Activated CD4-positive, alpha-beta T cell treated with anti-CD3 and anti-CD28 coated beads for 36 hours (primary cell): ENCODE measurements at regions of chr4 and their contacts with region 1.

Region 1: GRCh38 chr4:139177868-139178611 is 1.0 kb upstream of the ELF2 start:
- DNase-seq: peak; percentile 95
- ATAC-seq: peak; percentile 77
- H3K4me3 Mint-ChIP-seq: peak overlapping the region; percentile 81
- H3K27ac Mint-ChIP-seq: peak overlapping the region; percentile 72
- H3K4me1 Mint-ChIP-seq: peaks cover 12% of the 10 kb centered on the region
- H3K27me3 Mint-ChIP-seq: peaks cover 12% of the 10 kb centered on the region

Region 2: DNA sequence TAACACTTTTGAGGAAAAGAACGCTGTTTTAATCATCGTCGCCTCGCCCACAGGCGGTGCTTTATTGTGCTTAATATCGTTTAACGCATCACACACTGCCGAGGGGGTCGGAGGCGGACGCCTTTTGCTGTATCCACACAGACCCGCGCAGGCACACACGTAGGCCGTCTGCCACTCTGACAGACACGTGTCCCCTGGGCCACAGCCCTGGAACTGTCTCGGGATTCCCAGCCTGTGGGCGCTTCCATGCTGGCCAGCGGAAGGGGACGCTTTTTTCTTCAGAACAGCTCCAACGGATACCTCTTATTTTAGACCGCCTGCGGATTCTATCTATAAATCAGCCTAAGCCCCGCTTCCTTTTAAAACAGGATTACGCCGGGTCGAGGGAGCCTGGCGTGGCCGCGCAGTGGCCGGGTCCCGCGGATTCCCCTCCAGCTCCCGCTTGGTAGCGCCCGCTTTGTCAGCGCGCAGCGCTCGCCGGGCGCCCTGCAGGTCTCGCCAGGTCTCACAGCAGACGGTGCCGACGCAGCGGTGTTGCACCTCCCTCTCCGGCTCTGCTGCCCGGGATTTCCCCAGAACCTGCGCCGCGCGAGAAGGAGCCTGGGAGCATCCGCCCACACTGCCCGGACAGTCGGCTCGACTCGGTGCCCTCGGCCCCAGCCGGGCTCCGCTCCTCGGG is 162.6 kb before region 1 on chr4 and contains the start of gene NOCT:
- CTCF ChIA-PET with region 1: no interaction called
- POLR2A ChIA-PET with region 1: no interaction called
- intact Hi-C with region 1: loop called (anchors 1 kb)
- DNase-seq: peak; percentile 98
- ATAC-seq: peak; percentile 92
- H3K4me3 Mint-ChIP-seq: peak within 1 kb of the TSS; percentile 90
- H3K27ac Mint-ChIP-seq: peak within 1 kb of the TSS; percentile 96
- H3K4me1 Mint-ChIP-seq: peaks cover 41% of the 10 kb centered on the region
- H3K27me3 Mint-ChIP-seq: no peaks in the 10 kb centered on the region
- total RNA-seq, gene NOCT: 16.5 to 20.5 TPM

Region 3: DNA sequence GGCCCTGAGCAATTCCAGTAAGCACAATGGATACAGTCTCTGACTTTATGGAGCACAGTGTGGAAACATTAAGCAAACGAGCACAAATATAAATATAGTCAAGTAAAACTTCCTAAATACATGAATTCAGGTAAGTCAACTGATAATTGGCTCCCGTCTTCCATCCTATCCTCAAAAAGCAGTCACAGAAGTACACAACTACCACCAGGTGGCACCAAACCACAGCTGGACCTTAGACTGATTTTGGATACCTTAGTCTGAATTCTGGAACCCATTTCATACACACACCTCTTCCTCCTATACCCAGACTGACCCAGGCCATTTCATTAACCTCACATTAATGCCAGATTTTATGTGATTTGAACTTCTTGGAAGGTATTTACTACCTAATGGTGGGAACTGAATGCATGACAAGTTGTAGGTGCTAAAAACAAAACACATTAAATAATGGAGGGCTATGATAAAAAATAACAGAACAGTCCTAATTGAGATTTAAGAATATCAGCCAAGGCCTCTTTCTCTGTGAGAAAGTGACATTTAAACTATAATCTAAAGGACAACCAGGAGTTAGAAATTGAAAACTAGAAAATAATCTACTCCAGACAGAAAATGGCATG is 78.6 kb before region 1 on chr4:
- CTCF ChIA-PET with region 1: interaction called, 8 read pairs
- POLR2A ChIA-PET with region 1: no interaction called
- intact Hi-C with region 1: loop called (anchors 1 to 2 kb)
- DNase-seq: peak; percentile 84
- ATAC-seq: peak; percentile 66
- H3K4me3 Mint-ChIP-seq: no peak overlapping the region
- H3K27ac Mint-ChIP-seq: no peak overlapping the region
- H3K4me1 Mint-ChIP-seq: peaks cover 2% of the 10 kb centered on the region
- H3K27me3 Mint-ChIP-seq: no peaks in the 10 kb centered on the region

Region 4: DNA sequence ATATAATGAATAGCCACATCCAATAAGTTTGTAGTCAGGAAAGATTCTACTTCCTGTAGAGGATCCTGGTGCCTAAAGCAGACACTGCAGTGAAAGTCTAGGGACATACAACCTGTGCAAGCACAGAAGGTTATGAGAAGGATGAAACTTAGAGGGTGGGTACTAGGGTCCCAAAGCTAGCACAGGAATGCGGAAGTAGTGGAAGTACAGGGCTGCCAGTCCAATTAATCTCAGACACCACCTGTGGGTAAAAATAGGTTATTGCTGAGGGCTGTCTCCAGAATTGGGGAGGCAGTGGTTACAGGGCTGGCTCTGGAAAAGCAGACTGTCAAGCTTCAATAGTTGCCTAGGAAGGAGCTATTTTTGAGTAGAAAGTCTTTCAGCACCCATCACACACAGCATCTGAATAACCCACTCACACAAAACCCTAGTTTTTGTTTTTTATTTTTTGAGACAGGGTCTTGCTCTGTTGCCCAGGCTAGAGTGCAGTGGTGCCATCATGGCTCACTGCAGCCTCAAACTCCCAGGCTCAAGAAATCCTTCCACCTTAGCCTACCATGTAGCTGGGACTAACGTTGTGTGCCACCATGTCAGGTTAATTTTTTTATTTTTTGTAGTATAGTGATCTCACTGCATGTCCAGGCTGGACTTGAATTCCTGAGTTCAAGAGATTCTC is 49.8 kb after region 1 on chr4:
- CTCF ChIA-PET with region 1: no interaction called
- POLR2A ChIA-PET with region 1: no interaction called
- intact Hi-C with region 1: no loop called
- DNase-seq: peak; percentile 7
- ATAC-seq: peak; percentile 53
- H3K4me3 Mint-ChIP-seq: no peak overlapping the region
- H3K27ac Mint-ChIP-seq: no peak overlapping the region
- H3K4me1 Mint-ChIP-seq: peaks cover 17% of the 10 kb centered on the region
- H3K27me3 Mint-ChIP-seq: no peaks in the 10 kb centered on the region

Region 5: DNA sequence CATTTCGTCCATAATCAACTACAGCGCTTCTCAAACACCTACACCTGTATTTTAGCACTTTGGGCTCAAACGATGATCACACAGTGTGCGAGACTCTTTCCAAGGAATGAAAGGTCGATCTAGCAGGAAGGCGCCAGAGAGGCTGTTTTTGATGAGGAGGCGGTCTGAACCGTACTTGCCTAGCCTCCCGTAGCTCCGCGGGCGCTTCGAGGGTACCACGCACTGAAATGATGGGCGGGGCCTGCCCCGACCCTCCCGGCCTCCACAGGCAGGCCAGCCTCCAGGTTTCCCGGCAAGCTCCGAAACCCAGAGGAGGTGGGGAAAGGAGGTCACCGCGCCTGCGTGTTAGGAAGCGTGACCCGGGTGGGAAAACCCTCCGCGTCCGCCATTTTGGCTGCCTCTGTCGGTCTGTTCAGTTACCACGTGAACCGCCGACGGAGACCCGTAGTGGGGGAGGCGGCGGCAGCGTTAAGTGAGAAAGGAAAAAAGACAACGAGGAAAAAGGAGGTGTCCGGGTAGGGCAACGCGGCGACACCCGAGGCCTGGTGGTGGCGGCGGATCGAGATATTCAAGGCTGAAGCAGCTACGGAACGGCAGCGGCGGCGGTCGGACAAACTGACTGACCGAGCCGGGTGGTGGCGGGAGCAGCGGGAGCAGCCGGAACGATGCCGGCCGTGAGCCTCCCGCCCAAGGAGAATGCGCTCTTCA is 123.2 kb after region 1 on chr4 and contains the start of gene NAA15:
- CTCF ChIA-PET with region 1: interaction called, 4 read pairs
- POLR2A ChIA-PET with region 1: interaction called, 34 read pairs
- intact Hi-C with region 1: loop called (anchors 1 kb)
- DNase-seq: peak; percentile 99
- ATAC-seq: peak; percentile 89
- H3K4me3 Mint-ChIP-seq: peak within 1 kb of the TSS; percentile 98
- H3K27ac Mint-ChIP-seq: peak within 1 kb of the TSS; percentile 96
- H3K4me1 Mint-ChIP-seq: peaks cover 61% of the 10 kb centered on the region
- H3K27me3 Mint-ChIP-seq: no peaks in the 10 kb centered on the region
- total RNA-seq, gene NAA15: 64.3 to 113 TPM

Region 6: DNA sequence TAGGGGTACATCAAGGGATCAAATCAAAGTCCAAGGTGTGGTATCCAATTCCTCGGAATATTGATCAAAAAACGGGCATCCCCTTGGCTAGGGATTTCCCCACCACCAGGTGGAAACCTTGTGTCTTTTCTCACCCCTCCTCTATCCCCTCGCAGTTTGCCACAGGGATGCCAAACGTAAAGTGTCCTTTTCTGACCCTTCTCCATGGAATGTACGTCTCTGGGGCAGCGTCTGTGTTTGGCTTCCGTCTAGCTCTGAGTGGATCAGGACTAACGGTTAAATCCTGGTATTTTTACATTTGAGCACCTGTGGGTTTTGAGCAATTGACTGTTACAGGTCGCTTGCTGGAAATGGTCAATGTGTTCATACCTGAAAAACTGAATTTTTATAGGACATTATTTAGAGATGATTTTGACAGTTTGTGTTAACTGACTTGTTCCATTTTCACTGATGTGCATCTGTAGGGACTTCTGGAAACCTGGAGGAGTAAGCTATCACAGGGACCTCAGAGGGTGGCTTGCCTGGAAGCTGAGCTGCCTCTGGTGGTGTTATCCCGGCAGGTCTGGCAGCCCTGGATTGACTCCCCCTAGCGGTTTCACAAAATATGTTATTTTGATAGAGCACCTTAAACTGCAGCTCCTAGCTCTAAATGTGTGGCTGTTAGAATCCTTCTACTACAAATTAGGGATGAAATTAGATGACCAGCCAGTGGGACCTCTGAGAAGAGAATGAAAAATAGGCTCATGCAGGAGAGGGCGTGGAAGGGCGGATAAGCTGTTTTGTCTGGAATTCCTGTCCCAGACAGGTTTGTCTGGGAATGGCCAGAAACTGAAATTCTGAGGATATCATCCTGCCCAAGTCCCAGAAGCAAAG is 478.8 kb after region 1 on chr4:
- CTCF ChIA-PET with region 1: no interaction called
- POLR2A ChIA-PET with region 1: no interaction called
- intact Hi-C with region 1: loop called (anchors 5 kb)
- DNase-seq: peak; percentile 73
- ATAC-seq: peak; percentile 48
- H3K4me3 Mint-ChIP-seq: peak overlapping the region; percentile 57
- H3K27ac Mint-ChIP-seq: peak overlapping the region; percentile 99
- H3K4me1 Mint-ChIP-seq: peaks cover 24% of the 10 kb centered on the region
- H3K27me3 Mint-ChIP-seq: no peaks in the 10 kb centered on the region